ENCODE measurements at regions of chr17 and their contacts with region 1.

Region 1: DNA sequence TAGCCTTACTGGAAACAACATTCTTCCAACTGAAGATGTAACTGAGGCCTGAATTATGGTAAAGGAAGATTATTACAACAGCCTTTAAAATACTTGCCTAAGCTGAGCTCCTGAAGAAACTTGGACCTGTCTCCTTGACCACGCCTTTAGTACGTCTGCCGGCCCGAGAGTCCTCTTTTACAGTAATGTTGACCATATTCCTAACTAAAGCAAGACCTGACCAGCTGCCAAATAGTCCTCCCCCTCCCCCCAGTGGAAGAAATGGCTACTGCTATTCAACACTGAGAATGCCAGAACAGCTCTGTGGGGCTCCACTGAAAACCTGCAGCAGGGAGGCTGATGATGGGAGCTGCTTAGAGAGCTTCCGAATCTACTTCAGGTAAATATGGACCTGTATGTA is 12.6 kb upstream of the FOXJ1 start:
- DNase-seq: no peak
- H3K4me3 ChIP-seq: no peak overlapping the region
- H3K27ac ChIP-seq: no peak overlapping the region
- H3K4me1 ChIP-seq: peaks cover 0 to 13% (median 10%) of the 10 kb centered on the region in 4 experiments; a peak in 5 of 7 replicates
- H3K27me3 ChIP-seq: no peaks in the 10 kb centered on the region
- CTCF ChIP-seq: peak; percentile 28 to 58 (median 54)
- EP300 ChIP-seq: no peak
- POLR2A ChIP-seq: no peak
- RAD21 ChIP-seq: peak; percentile 63 to 73

Region 2: DNA sequence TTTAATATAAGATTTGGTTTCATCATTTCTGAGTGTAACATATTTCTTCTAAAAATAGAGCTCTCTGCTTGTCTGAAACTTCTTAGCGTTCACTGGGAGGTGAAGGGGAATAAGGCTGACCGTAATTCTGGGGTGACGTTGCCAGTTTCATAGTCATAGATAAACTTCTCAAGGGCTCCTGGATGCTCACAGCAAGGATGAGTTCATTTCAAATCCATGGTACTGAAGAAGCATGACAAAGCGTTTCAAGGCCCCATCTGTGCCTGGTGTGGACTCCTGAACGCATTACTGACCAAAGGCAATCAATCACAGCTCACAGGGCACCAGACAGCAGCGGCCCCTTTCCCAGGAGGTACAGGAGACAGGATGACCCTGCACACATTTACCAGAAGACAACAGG is 114.5 kb before region 1 on chr17:
- CTCF ChIA-PET with region 1: no interaction called
- POLR2A ChIA-PET with region 1: no interaction called
- DNase-seq: no peak
- H3K4me3 ChIP-seq: no peak overlapping the region
- H3K27ac ChIP-seq: no peak overlapping the region
- H3K4me1 ChIP-seq: peaks cover 0 to 20% (median 8%) of the 10 kb centered on the region in 4 experiments; a peak in 6 of 7 replicates
- H3K27me3 ChIP-seq: no peaks in the 10 kb centered on the region
- CTCF ChIP-seq: no peak
- EP300 ChIP-seq: no peak
- POLR2A ChIP-seq: no peak
- RAD21 ChIP-seq: no peak

Region 3: DNA sequence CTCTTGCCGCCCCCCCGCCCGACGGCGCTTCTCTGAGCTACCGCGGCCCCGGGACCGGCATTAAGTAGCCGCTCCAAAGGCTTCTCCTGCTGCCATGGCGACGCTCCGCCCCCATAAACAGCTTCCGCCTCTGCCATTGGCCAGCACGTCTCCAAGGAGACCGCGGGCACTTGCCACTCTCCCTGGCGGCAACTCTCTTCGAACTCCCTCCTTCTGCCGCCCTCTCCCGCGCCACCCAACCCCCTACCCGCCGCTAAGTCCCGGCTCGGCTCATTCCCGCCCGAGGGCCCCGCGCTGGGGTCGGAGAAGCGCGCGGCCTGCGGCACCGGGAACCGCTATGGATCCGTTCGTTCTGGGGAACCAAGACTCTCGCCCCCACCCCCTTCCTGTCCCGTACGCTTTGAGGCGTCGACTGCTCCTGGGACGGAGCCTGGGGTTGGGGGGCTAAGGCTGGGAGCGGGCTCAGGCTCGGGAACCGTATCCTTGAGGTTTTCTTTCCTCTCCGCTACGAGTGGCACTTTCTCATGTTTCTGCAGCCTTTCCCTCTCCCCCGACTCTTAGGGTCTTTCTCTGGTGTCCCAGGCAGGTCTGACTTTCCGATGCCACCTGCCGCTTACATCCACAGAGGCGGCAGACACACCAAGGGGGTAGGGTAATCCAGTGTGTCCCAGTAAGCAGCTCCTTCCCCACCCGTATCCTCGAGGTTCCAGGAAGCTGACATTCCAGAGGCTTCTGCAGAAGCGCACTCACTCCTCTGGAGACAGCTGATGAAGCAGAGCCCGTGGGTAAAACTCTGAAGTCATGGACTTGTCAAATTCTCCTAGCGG is 12.2 kb before region 1 on chr17 and contains the start of gene FOXJ1:
- CTCF ChIA-PET with region 1: interaction called, 778 read pairs
- POLR2A ChIA-PET with region 1: interaction called, 10 read pairs
- DNase-seq: peak; percentile 88 to 100
- H3K4me3 ChIP-seq: peak within 1 kb of the TSS; percentile 53 to 71 (median 58)
- H3K27ac ChIP-seq: no peak within 1 kb of the TSS
- H3K4me1 ChIP-seq: peaks cover 17 to 59% (median 54%) of the 10 kb centered on the region in 4 experiments
- H3K27me3 ChIP-seq: peaks cover 31 to 67% (median 60%) of the 10 kb centered on the region in 4 experiments
- CTCF ChIP-seq: no peak
- EP300 ChIP-seq: no peak
- POLR2A ChIP-seq: no peak
- RAD21 ChIP-seq: no peak
- total RNA-seq, gene FOXJ1: 4.9 and 5.4 TPM in 2 replicates

Measured in H1 (cell line).